ENCODE measurements at regions of chr4 and their contacts with region 1.

Region 1: DNA sequence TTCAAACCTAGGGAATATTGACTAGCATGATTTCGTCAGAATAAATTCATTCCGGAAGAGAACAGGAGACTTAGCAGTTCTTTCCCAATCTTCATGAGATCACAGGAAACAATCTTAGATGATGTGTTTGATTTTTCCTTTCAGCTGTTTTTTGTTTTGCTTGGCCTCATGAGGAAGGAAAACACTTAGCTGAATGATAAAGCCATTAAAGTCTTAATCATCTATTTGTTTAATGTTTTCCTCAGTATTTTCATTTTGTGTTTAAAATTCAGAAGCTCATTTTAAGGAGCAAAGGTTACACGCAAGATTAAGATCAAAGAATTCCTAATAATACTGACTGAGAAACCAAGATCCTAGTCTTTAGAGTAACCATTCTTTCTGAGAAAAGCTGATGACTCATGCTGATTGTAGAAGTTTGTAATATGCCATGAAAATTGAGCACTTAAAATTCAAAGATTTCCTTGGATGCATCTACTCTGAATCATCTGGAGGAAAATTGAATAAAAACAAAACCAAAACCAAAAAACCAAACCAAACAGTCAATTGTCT is 15.4 kb upstream of the TBC1D19 start:
- DNase-seq: peak; percentile 93
- ATAC-seq: peak; percentile 76
- H3K4me3 ChIP-seq: peak overlapping the region in 1 of 2 experiments; percentile 26; a peak in 1 of 4 replicates
- H3K27ac ChIP-seq: peak overlapping the region; percentile 88
- H3K4me1 ChIP-seq: peaks cover 46 to 61% of the 10 kb centered on the region in 2 experiments
- H3K27me3 ChIP-seq: no peaks in the 10 kb centered on the region
- CTCF ChIP-seq: no peak
- POLR2A ChIP-seq: no peak
- RAD21 ChIP-seq: no peak

Region 2: DNA sequence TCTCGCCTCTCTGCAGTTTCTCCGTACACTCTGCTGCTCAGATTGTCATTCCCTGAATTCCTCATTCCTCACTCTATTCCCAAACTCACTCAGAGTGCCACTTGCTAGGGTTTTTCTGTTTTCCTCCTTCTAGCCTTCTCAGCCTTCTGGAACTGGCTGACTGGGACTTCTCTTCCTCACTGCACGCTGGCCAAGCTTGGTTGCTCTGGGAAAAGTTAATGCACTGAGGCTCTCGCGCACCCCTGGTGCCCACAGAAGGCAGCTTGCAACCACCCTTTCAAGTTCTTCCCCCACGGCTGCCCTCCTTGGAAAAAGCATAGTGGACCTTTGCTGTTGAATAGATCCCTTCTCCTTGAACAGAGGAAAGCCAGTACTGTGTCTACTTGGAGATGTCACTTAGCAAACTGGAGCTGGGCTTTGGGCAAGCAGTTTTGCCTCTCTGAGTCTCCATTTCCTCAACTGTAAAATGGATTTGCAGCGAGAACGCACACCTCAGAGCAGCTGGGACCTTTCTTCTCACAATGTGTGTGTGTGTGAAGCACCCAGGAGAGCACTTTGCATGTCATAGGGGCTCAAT is 72.2 kb before region 1 on chr4:
- CTCF ChIA-PET with region 1: no interaction called
- POLR2A ChIA-PET with region 1: no interaction called
- RAD21 ChIA-PET with region 1: no interaction called
- intact Hi-C with region 1: loop called (anchors 1 kb)
- DNase-seq: no peak
- ATAC-seq: no peak
- H3K4me3 ChIP-seq: no peak overlapping the region
- H3K27ac ChIP-seq: no peak overlapping the region
- H3K4me1 ChIP-seq: peaks cover 14% of the 10 kb centered on the region in 2 experiments
- H3K27me3 ChIP-seq: no peaks in the 10 kb centered on the region; the same call in 1 of the 2 replicates
- CTCF ChIP-seq: no peak
- POLR2A ChIP-seq: no peak
- RAD21 ChIP-seq: no peak

Region 3: GRCh38 chr4:26632916-26633315 is 64.4 kb after region 1 on chr4:
- CTCF ChIA-PET with region 1: no interaction called
- POLR2A ChIA-PET with region 1: no interaction called
- RAD21 ChIA-PET with region 1: no interaction called
- intact Hi-C with region 1: no loop called
- DNase-seq: no peak
- ATAC-seq: no peak
- H3K4me3 ChIP-seq: no peak overlapping the region
- H3K27ac ChIP-seq: no peak overlapping the region
- H3K4me1 ChIP-seq: no peaks in the 10 kb centered on the region
- H3K27me3 ChIP-seq: no peaks in the 10 kb centered on the region
- CTCF ChIP-seq: no peak
- POLR2A ChIP-seq: no peak
- RAD21 ChIP-seq: no peak